Activated B cell treated with CpG ODN at 0.5 μM for 24 hours (primary cell): ENCODE measurements at regions of chrX and their contacts with region 1.

Region 1: DNA sequence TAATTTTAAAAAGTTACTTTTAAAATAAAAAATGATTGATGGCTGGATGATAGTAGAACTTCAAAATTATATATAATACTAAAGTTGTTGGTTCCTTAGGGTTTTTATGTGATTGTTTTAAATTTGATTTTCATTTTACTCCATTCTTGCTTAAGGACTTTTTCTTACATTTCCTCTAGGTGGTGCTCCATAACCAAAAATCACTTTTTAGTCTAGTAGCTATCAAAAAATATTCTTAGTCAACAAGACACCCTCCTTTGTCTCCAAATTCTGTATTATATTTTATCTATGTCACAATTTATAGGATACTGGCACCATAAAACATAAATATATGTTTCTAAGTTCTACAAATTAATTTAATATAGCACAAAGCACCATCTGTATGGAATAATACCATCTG is 67.2 kb upstream of the BRWD3 start:
- DNase-seq: no peak
- ATAC-seq: no peak
- H3K4me3 Mint-ChIP-seq: no peak overlapping the region
- H3K27ac Mint-ChIP-seq: no peak overlapping the region
- H3K4me1 Mint-ChIP-seq: no peaks in the 10 kb centered on the region
- H3K27me3 Mint-ChIP-seq: no peaks in the 10 kb centered on the region
- CTCF ChIP-seq: no peak

Region 2: GRCh38 chrX:80799584-80799983 is 77.3 kb before region 1 on chrX:
- CTCF ChIA-PET with region 1: no interaction called
- POLR2A ChIA-PET with region 1: no interaction called
- intact Hi-C with region 1: no loop called
- DNase-seq: no peak
- ATAC-seq: no peak
- H3K4me3 Mint-ChIP-seq: no peak overlapping the region
- H3K27ac Mint-ChIP-seq: no peak overlapping the region
- H3K4me1 Mint-ChIP-seq: peaks cover 16% of the 10 kb centered on the region
- H3K27me3 Mint-ChIP-seq: no peaks in the 10 kb centered on the region
- CTCF ChIP-seq: no peak

Region 3: DNA sequence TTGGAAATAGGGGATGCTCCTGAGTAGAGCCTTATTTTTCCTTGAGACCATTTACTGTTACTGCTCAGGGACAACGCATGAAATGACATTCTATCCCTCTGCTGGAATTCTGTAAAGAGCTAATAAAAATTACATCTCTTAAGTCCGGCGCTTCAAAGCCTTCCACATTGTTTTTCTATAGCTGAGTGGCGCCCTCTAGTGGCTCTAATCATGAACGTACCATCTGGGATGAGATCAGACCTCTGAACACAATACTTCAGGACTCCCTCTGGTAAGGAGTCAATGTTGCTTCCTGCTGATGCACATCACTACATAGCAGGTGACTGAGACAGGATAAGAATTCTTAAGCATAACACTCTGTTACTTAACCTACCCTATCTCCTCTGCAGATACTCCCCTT is 318.8 kb after region 1 on chrX:
- CTCF ChIA-PET with region 1: no interaction called
- POLR2A ChIA-PET with region 1: no interaction called
- intact Hi-C with region 1: loop called (anchors 2 kb)
- DNase-seq: no peak
- ATAC-seq: peak; percentile 60
- H3K4me3 Mint-ChIP-seq: no peak overlapping the region
- H3K27ac Mint-ChIP-seq: no peak overlapping the region
- H3K4me1 Mint-ChIP-seq: peaks cover 14% of the 10 kb centered on the region
- H3K27me3 Mint-ChIP-seq: no peaks in the 10 kb centered on the region
- CTCF ChIP-seq: no peak

Region 4: DNA sequence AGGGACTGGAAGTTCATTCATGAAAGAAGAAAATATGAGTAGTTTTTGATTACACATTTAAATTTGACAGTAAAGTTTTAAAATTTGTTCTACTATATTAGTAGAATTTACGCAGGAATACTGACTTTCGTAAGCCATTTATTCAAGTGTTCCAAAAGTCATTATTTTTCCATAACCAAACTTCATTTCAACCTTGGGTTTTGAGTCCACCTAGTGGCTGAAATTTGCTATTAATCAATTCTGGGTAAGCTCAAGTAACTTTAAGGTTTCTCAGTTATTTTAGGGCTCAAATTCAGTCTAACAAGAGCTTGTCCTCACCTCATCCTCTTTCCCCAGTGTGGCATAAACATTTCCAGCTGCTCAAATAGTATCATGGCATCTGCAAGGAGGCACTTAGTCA is 500.5 kb after region 1 on chrX:
- CTCF ChIA-PET with region 1: interaction called, 5 read pairs
- POLR2A ChIA-PET with region 1: no interaction called
- intact Hi-C with region 1: loop called (anchors 1 kb)
- DNase-seq: no peak
- ATAC-seq: no peak
- H3K4me3 Mint-ChIP-seq: no peak overlapping the region
- H3K27ac Mint-ChIP-seq: no peak overlapping the region
- H3K4me1 Mint-ChIP-seq: no peaks in the 10 kb centered on the region
- H3K27me3 Mint-ChIP-seq: peaks cover 2% of the 10 kb centered on the region
- CTCF ChIP-seq: no peak